ENCODE measurements at regions of chr16 and their contacts with region 1.

Region 1: DNA sequence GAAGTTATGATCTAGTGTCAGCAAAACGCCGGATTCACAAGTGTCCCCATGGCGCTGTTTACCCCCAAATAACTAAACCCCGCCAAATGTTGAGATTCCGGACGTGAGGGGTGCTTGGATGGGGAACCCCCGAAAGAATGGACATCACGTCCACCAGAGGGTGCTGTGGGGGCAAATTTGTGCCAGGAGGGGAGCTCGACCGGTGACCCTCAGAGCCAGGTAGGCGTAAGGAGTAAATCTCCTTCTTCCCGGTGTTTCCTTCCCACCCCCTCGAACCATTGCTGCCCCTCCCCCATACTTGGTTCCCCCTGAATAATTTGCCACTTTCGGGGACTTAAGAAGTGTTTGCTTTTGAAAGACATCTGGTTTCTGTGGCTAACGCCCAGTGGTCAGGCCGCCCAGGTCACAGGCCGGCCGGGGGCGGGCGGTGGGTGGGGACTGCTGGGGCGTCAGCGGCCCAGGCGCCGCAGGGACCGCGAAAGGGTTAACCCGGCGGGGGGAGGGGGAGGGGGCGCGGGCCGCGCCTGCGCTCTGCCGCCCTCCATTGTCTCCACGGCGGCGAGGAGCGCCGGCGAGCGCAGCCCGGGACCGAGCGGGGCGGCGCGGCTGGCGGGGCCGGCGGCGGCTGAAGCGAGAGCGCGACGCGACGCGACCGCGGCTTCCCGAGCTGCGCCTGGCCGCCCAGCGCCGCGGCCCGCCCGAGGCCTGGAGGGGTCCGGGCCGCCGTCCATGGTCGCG is at the start of gene ZNRF1:
- DNase-seq: peak; percentile 70 to 81 (median 74)
- H3K4me3 ChIP-seq: peak within 1 kb of the TSS in 1 of 2 donors; percentile 60
- H3K4me3 Mint-ChIP-seq: peak within 1 kb of the TSS; percentile 80 to 90 (median 88)
- H3K27ac ChIP-seq: peak within 1 kb of the TSS; percentile 49
- H3K27ac Mint-ChIP-seq: peak within 1 kb of the TSS; percentile 84 to 95 (median 91)
- H3K4me1 ChIP-seq: peaks cover 21% of the 10 kb centered on the region
- H3K4me1 Mint-ChIP-seq: peaks cover 8 to 22% (median 16%) of the 10 kb centered on the region in 4 donors
- H3K27me3 ChIP-seq: no peaks in the 10 kb centered on the region
- H3K27me3 Mint-ChIP-seq: peaks cover 0 to 2% of the 10 kb centered on the region in 2 donors
- total RNA-seq, gene ZNRF1: 6.0 to 6.2 TPM

Region 2: DNA sequence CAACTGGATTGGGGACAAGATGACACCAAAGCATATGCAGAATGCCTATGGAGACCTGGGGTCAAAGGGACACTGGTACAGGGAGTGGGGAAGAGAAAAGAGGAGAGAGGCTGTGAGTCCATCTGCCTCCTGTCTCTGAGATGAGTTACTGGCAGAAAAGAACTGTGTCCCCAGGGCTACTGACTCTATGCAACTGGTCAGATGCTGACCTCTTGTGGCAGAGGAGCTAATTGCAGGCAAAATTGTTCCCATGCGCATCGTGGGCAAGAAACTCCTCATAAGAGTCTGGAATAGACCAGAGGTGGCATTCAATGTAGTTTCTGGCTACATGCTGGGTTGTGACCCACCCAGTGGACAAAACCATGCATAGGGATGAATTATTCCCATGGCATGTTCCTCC is 271.9 kb before region 1 on chr16:
- CTCF ChIA-PET with region 1: no interaction called
- POLR2A ChIA-PET with region 1: no interaction called
- intact Hi-C with region 1: no loop called
- DNase-seq: no peak
- H3K4me3 ChIP-seq: no peak overlapping the region
- H3K4me3 Mint-ChIP-seq: no peak overlapping the region
- H3K27ac ChIP-seq: no peak overlapping the region
- H3K27ac Mint-ChIP-seq: peak overlapping the region in 1 of 7 donors; percentile 36
- H3K4me1 ChIP-seq: peaks cover 6% of the 10 kb centered on the region
- H3K4me1 Mint-ChIP-seq: peaks cover 7 to 16% (median 10%) of the 10 kb centered on the region in 4 donors
- H3K27me3 ChIP-seq: no peaks in the 10 kb centered on the region
- H3K27me3 Mint-ChIP-seq: peaks cover 0 to 4% of the 10 kb centered on the region in 2 donors

Region 3: DNA sequence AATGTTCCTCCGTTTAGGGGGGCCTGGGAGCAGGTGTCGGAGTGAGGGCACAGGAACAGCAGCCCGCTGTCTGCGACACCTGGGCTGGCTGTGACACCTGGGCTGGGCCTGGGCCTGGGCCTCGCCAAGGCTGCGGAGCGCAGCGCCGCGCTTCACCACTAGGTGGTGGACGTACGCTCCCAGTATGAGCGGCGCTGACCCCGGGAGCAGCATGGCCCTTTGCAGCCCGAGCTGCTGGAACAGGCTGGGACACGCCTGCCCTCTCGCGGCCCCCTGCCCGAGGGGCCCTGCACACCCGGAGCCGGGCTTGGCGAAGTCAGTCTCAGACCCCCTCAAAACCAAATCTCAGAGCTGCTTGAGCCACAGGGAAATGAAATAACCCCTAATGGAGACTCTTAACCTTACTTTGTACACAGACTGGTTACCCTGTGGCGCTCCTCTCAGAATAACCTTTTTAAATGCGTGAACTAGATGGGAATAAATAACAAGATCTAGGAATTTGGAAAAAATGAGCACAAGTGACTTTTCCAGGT is 185.5 kb before region 1 on chr16:
- CTCF ChIA-PET with region 1: no interaction called
- POLR2A ChIA-PET with region 1: no interaction called
- intact Hi-C with region 1: loop called (anchors 1 kb)
- DNase-seq: peak; percentile 51 to 72 (median 60)
- H3K4me3 ChIP-seq: no peak overlapping the region
- H3K4me3 Mint-ChIP-seq: peak overlapping the region in 3 of 8 donors; percentile 10 to 47 (median 46)
- H3K27ac ChIP-seq: no peak overlapping the region
- H3K27ac Mint-ChIP-seq: no peak overlapping the region
- H3K4me1 ChIP-seq: peaks cover 4% of the 10 kb centered on the region
- H3K4me1 Mint-ChIP-seq: no peaks in the 10 kb centered on the region
- H3K27me3 ChIP-seq: no peaks in the 10 kb centered on the region
- H3K27me3 Mint-ChIP-seq: peaks cover 2 to 4% of the 10 kb centered on the region in 2 donors

Region 4: GRCh38 chr16:74984535-74985296 is 13.9 kb before region 1 on chr16 and contains the start of gene WDR59:
- CTCF ChIA-PET with region 1: interaction called, 43 read pairs
- POLR2A ChIA-PET with region 1: interaction called, 15 read pairs
- intact Hi-C with region 1: loop called (anchors 1 kb)
- DNase-seq: peak; percentile 97 to 100 (median 99)
- H3K4me3 ChIP-seq: peak within 1 kb of the TSS; percentile 90 to 96
- H3K4me3 Mint-ChIP-seq: peak within 1 kb of the TSS; percentile 93 to 98 (median 96)
- H3K27ac ChIP-seq: peak within 1 kb of the TSS; percentile 87
- H3K27ac Mint-ChIP-seq: peak within 1 kb of the TSS; percentile 84 to 99 (median 95)
- H3K4me1 ChIP-seq: peaks cover 18% of the 10 kb centered on the region
- H3K4me1 Mint-ChIP-seq: peaks cover 8 to 29% (median 19%) of the 10 kb centered on the region in 4 donors
- H3K27me3 ChIP-seq: no peaks in the 10 kb centered on the region
- H3K27me3 Mint-ChIP-seq: no peaks in the 10 kb centered on the region
- total RNA-seq, gene WDR59: 116 to 127 TPM

Region 5: GRCh38 chr16:75011634-75012307 is 13.1 kb after region 1 on chr16:
- CTCF ChIA-PET with region 1: interaction called, 11 read pairs
- POLR2A ChIA-PET with region 1: interaction called, 16 read pairs
- intact Hi-C with region 1: no loop called
- DNase-seq: peak; percentile 13 to 78 (median 26)
- H3K4me3 ChIP-seq: no peak overlapping the region
- H3K4me3 Mint-ChIP-seq: peak overlapping the region in 6 of 8 donors; percentile 63 to 85 (median 82)
- H3K27ac ChIP-seq: peak overlapping the region; percentile 47
- H3K27ac Mint-ChIP-seq: peak overlapping the region; percentile 67 to 94 (median 91)
- H3K4me1 ChIP-seq: peaks cover 22% of the 10 kb centered on the region
- H3K4me1 Mint-ChIP-seq: peaks cover 14 to 26% (median 17%) of the 10 kb centered on the region in 4 donors
- H3K27me3 ChIP-seq: no peaks in the 10 kb centered on the region
- H3K27me3 Mint-ChIP-seq: no peaks in the 10 kb centered on the region

Region 6: DNA sequence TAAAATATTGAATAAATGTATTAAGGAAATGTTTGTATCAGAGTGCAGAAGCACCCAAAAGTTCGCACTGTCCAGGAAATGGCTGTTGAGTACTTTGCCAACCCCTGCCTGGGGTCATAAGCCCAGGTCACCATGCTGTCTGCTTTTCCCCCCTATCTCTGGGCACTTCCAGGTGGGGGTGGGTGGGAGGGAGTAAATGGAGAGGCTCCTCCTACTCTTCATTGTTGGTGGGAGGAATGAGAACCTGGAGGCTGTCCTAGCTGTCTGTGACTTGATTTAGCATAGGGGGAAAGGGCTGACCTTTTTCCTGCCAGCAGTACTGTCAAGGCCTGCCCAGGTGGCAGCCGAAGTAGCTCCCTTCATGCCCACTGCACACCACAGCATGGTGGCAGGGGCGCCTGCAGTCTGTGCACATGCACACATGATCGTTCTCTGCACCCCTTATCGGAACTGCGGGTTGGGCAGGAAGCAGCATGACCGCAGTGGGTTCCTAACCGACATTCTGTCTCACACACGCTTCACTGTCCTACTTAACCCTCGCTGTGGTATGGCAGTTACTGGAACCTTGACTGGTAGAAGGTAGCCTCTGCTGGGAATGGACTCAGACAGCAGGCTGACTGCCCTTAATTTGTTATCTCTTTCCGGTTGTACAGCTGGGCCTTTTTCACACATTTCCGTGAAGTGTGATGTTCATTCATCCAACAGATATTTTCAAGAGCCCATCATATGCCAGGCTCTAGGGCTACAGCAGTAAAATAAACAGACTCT is 76.5 kb after region 1 on chr16:
- CTCF ChIA-PET with region 1: interaction called, 9 read pairs
- POLR2A ChIA-PET with region 1: interaction called, 6 read pairs
- intact Hi-C with region 1: loop called (anchors 1 kb)
- DNase-seq: peak; percentile 86 to 91 (median 87)
- H3K4me3 ChIP-seq: peak overlapping the region; percentile 5 to 44
- H3K4me3 Mint-ChIP-seq: peak overlapping the region; percentile 59 to 81 (median 72)
- H3K27ac ChIP-seq: peak overlapping the region; percentile 39
- H3K27ac Mint-ChIP-seq: peak overlapping the region; percentile 75 to 98 (median 95)
- H3K4me1 ChIP-seq: peaks cover 53% of the 10 kb centered on the region
- H3K4me1 Mint-ChIP-seq: peaks cover 45 to 66% (median 59%) of the 10 kb centered on the region in 4 donors
- H3K27me3 ChIP-seq: no peaks in the 10 kb centered on the region
- H3K27me3 Mint-ChIP-seq: no peaks in the 10 kb centered on the region

Region 7: DNA sequence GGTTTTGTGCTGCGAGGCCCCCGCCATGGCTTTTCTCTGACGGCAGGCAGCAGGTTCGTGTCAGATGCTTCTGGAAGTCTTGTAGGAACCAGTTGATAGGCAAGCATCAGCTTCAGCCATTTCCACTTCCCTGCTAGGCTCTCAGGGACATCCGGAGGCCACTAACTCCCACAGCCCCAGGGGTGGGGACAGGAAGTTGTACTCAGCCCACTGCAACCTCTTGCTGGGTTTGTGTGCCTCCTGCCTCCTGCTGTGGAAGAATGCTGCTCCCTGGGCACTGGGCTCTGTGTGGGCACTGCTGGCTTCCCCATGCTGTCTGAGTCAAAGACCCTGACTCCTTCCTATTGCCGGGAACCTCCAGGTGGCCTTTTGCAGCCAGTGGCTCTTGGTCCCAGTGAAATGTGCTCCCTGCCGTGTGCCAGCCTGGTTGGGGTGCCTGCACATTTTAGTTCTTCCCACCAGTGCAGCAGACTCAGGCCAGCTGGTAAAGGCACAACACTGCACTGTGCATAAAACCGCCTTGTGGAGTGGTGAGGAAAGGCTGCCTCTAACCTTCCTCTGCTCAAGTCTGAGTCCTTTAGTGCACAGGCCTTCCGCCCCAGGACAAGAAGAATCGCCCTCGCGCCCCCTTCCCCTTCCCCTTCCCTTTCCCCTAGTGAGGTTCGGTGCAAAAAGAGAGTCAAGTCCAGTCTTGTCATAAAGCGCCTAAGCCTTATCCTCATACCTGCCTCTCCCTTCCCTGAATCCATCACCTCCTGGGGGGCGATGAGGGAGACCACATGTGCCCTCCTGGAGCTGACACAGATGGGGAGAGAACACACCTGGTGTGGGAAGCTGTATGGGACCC is 101.3 kb after region 1 on chr16:
- CTCF ChIA-PET with region 1: interaction called, 15 read pairs
- POLR2A ChIA-PET with region 1: interaction called, 14 read pairs
- intact Hi-C with region 1: loop called (anchors 5 kb)
- DNase-seq: peak; percentile 36 to 58 (median 43)
- H3K4me3 ChIP-seq: peak overlapping the region in 1 of 2 donors; percentile 6
- H3K4me3 Mint-ChIP-seq: peak overlapping the region; percentile 10 to 82 (median 63)
- H3K27ac ChIP-seq: peak overlapping the region; percentile 70
- H3K27ac Mint-ChIP-seq: peak overlapping the region; percentile 93 to 98 (median 97)
- H3K4me1 ChIP-seq: peaks cover 45% of the 10 kb centered on the region
- H3K4me1 Mint-ChIP-seq: peaks cover 31 to 61% (median 37%) of the 10 kb centered on the region in 4 donors
- H3K27me3 ChIP-seq: no peaks in the 10 kb centered on the region
- H3K27me3 Mint-ChIP-seq: no peaks in the 10 kb centered on the region

Region 8: DNA sequence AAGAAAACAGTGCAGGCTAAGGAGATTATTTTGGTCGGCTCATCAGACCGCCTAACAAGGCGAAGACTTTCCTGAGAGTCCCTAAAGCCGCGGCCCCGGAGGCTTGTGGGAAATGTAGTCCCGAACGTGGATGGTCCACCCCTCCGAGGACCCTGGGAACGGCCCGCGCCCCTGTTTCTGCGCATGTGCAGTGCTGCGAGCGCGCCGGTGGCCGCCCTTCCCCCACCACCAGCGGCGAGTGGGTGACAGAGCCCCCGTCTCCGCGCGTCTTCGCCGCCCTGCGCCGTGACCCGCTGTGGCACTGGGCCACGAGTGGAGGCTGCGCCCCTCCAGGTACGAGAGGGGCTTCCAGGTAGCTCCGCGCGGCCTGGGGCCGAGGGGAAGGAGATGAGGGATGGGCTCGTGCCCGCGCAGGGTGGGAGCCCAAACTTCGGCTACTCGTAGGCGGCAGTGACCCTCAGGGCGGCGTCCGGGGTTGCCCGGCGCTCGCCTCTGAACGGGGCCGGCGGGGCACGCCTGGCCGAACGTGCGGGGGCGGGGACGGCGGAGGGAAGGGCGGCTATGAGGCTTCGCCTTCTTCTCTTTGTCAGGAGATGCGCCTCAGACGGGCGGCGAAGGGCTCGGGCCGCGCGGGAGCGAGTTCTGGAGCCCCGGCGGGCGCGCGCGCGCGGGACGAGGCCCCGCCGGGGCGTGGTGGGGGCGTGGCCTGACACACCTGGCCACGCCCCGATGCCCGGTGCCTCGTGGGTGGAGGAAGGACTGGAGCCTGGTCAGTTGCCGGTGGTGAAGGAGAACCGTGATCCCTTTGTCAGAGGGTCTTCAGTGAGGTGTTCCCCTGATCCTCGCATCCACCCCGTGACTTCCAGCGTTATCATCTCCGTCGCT is 149.9 kb after region 1 on chr16 and contains the start of gene ZFP1:
- CTCF ChIA-PET with region 1: interaction called, 3 read pairs
- POLR2A ChIA-PET with region 1: interaction called, 4 read pairs
- intact Hi-C with region 1: loop called (anchors 1 kb)
- DNase-seq: peak; percentile 92 to 96 (median 93)
- H3K4me3 ChIP-seq: peak within 1 kb of the TSS; percentile 44 to 95
- H3K4me3 Mint-ChIP-seq: peak within 1 kb of the TSS; percentile 82 to 91 (median 88)
- H3K27ac ChIP-seq: peak within 1 kb of the TSS; percentile 75
- H3K27ac Mint-ChIP-seq: peak within 1 kb of the TSS; percentile 75 to 93 (median 91)
- H3K4me1 ChIP-seq: peaks cover 5% of the 10 kb centered on the region
- H3K4me1 Mint-ChIP-seq: peaks cover 8 to 23% (median 13%) of the 10 kb centered on the region in 4 donors
- H3K27me3 ChIP-seq: no peaks in the 10 kb centered on the region
- H3K27me3 Mint-ChIP-seq: no peaks in the 10 kb centered on the region
- total RNA-seq, gene ZFP1: 11.7 to 13.4 TPM

Measured in CD4-positive, alpha-beta memory T cell (primary cell).